HEK293 (cell line): ENCODE measurements at regions of chr1 and their contacts with region 1.

Region 1: GRCh38 chr1:234499119-234499942 is 20.4 kb upstream of the TARBP1 start:
- H3K4me3 ChIP-seq: no peak overlapping the region
- H3K27ac ChIP-seq: peak overlapping the region; percentile 42
- H3K4me1 ChIP-seq: peaks cover 15% of the 10 kb centered on the region
- CTCF ChIP-seq: peak; percentile 98

Region 2: DNA sequence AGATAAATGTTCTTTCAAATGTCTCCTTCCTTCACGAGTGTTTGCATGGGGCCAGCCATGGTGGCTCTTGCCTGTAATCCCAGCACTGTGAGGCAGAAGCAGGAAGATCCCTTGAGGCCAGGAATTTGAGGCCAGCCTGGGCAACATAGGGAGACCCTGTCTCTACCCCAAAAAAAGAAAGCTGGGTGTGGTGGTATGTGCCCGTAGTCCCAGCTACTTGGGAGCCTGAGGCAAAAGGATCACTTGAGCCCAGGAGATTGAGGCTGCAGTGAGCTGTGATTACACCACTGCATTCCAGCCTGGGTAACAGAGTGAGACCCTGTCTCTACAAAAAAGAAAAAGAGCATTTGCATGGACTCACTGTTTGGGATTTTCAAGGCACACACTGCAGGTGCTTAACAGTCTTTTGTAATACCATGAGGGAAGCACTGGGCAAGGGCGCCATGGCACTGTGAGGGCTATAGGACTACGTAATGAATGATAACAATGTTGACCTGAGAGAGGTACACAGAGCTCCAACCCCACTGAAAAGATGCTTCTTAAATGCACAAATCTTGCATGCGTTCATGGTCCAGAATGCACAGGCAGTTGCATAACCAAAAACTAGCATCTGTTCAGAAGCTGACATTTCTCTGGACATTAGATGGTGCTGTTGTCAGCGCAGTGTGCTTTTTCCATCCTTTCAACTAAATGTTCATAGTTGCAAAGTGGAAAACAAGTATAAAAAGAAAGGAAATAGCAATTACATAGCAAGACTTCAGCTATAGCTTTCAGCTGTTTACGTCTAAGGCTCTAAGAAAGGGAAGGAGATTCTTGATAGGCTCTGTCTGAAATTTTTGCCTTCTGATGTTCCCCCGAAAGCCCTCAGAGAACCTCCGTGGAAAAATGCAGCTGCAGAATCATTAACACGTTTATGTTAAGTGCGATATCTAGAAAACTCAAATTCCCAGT is 12.6 kb before region 1 on chr1:
- CTCF ChIA-PET with region 1: interaction called, 40 read pairs
- POLR2A ChIA-PET with region 1: no interaction called
- H3K4me3 ChIP-seq: no peak overlapping the region
- H3K27ac ChIP-seq: no peak overlapping the region
- H3K4me1 ChIP-seq: peaks cover 5% of the 10 kb centered on the region
- CTCF ChIP-seq: peak; percentile 70; the same call in 1 of the 2 replicates

Region 3: DNA sequence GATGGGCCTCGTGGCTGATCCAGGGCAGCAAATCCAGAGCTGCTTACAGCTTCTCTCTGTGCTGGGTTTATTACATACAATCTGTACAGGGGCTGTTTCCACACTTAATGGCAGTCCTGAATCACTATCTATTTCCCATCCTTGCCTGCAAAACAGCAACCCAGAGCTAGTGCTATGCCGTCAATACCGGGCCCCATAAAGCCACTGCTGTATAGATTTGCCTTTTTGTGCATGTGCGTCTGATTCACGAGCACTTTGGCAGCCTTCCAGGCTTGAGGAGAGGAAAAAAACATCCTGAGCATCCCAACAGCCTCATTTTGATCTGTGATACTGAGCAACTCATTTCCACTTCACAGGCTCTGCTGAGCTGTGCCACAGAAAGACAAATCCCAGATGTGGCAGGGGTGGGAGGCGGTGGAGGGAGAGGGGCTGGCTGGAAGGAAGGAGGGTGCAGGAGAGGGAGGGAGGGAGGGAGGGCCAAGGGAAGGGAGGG is 44.8 kb after region 1 on chr1:
- CTCF ChIA-PET with region 1: interaction called, 15 read pairs
- POLR2A ChIA-PET with region 1: interaction called, 3 read pairs
- H3K4me3 ChIP-seq: no peak overlapping the region
- H3K27ac ChIP-seq: peak overlapping the region; percentile 87
- H3K4me1 ChIP-seq: peaks cover 23% of the 10 kb centered on the region
- CTCF ChIP-seq: no peak

Region 4: GRCh38 chr1:234564642-234565037 is 65.3 kb after region 1 on chr1:
- CTCF ChIA-PET with region 1: interaction called, 10 read pairs
- POLR2A ChIA-PET with region 1: no interaction called
- H3K4me3 ChIP-seq: no peak overlapping the region
- H3K27ac ChIP-seq: no peak overlapping the region
- H3K4me1 ChIP-seq: peaks cover 14% of the 10 kb centered on the region
- CTCF ChIP-seq: no peak

Region 5: DNA sequence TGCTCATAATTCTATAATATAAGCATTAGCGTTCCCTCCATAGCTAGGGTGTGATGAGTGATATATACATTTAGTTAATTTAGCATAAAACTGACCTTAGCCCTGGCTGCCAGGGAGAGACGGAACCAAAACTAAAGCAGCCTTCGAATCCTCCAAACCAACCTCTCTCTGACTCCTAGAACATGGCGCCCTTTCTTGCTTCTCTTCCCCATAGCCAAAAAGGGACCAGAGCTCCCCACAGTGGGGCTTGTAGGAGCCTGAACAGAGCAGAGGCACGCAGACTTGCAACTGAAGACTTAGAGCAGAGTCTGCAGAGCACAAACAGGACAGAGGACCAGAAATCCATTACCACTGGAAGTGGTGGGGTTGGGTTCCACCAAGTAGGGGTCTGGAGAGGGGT is 92.9 kb after region 1 on chr1:
- CTCF ChIA-PET with region 1: interaction called, 12 read pairs
- POLR2A ChIA-PET with region 1: no interaction called
- H3K4me3 ChIP-seq: no peak overlapping the region
- H3K27ac ChIP-seq: no peak overlapping the region
- H3K4me1 ChIP-seq: no peaks in the 10 kb centered on the region
- CTCF ChIP-seq: peak; percentile 41; the same call in 1 of the 2 replicates